ENCODE measurements at regions of chr18 and their contacts with region 1.

Region 1: GRCh38 chr18:50819728-50820378 is at the start of gene MRO:
- DNase-seq: peak; percentile 85
- H3K4me3 Mint-ChIP-seq: no peak within 1 kb of the TSS
- H3K27ac Mint-ChIP-seq: no peak within 1 kb of the TSS
- H3K4me1 Mint-ChIP-seq: no peaks in the 10 kb centered on the region
- H3K27me3 Mint-ChIP-seq: no peaks in the 10 kb centered on the region
- total RNA-seq, gene MRO: not detected

Region 2: GRCh38 chr18:50830544-50830943 is 10.7 kb after region 1 on chr18:
- CTCF ChIA-PET with region 1: interaction called, 11 read pairs
- POLR2A ChIA-PET with region 1: no interaction called
- intact Hi-C with region 1: no loop called
- DNase-seq: no peak
- H3K4me3 Mint-ChIP-seq: no peak overlapping the region
- H3K27ac Mint-ChIP-seq: no peak overlapping the region
- H3K4me1 Mint-ChIP-seq: no peaks in the 10 kb centered on the region
- H3K27me3 Mint-ChIP-seq: peaks cover 1% of the 10 kb centered on the region

Region 3: GRCh38 chr18:50902797-50903196 is 82.9 kb after region 1 on chr18:
- CTCF ChIA-PET with region 1: interaction called, 4 read pairs
- POLR2A ChIA-PET with region 1: no interaction called
- intact Hi-C with region 1: loop called (anchors 1 kb)
- DNase-seq: no peak
- H3K4me3 Mint-ChIP-seq: no peak overlapping the region
- H3K27ac Mint-ChIP-seq: no peak overlapping the region
- H3K4me1 Mint-ChIP-seq: peaks cover 28% of the 10 kb centered on the region
- H3K27me3 Mint-ChIP-seq: no peaks in the 10 kb centered on the region

Region 4: DNA sequence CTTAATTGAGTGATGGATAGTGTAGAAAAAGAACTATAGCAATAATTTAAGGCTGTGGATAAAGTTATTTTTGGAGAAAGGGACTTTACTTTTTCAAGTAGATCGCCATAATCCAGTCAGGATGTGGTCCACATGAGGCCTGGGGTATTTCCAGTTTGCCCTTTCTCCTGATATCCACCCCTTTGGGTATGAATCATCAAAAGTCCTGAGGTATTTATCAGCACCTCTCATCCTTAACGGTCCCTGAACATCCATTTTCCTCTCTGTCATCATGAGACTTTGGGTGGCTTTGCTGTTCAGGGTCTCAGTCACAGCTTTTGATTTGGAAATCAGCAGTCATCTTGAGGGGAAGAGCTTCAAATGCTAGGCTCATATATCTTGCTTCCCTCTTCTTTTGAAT is 108.7 kb after region 1 on chr18:
- CTCF ChIA-PET with region 1: no interaction called
- POLR2A ChIA-PET with region 1: no interaction called
- intact Hi-C with region 1: no loop called
- DNase-seq: no peak
- H3K4me3 Mint-ChIP-seq: no peak overlapping the region
- H3K27ac Mint-ChIP-seq: no peak overlapping the region
- H3K4me1 Mint-ChIP-seq: no peaks in the 10 kb centered on the region
- H3K27me3 Mint-ChIP-seq: no peaks in the 10 kb centered on the region

Region 5: GRCh38 chr18:50973367-50974126 is 153.7 kb after region 1 on chr18:
- CTCF ChIA-PET with region 1: no interaction called
- POLR2A ChIA-PET with region 1: no interaction called
- intact Hi-C with region 1: loop called (anchors 1 kb)
- DNase-seq: peak; percentile 23
- H3K4me3 Mint-ChIP-seq: no peak overlapping the region
- H3K27ac Mint-ChIP-seq: peak overlapping the region; percentile 75
- H3K4me1 Mint-ChIP-seq: peaks cover 34% of the 10 kb centered on the region
- H3K27me3 Mint-ChIP-seq: no peaks in the 10 kb centered on the region

Region 6: DNA sequence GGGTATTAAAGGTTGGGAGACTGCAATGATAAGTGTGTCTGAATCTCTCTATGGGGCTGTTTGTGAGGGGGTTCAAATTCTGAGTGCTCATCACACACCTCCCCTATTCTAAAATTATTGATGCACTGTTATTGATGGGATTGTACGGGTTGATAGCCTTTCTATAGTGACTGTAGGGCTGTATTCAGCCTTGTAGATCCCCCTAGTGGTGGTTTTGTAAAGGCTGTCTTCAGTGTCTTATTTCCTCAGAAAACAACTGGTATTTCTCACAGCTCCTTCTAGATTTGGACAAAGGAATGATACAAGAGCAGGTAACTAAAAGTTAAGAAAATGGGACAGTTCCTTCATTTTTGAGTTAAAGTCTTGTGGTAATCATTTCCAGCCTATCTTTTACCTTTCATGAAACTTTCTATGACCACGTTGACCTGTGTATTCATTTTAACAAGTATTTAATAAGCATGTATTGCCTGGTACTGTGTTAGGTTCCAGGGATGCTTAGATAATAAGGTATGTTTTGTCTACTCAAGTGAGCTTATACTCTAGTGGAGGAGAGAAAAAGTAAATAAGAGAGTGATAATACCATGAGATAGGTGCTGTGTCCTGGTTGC is 231.4 kb after region 1 on chr18:
- CTCF ChIA-PET with region 1: interaction called, 36 read pairs
- POLR2A ChIA-PET with region 1: no interaction called
- intact Hi-C with region 1: loop called (anchors 1 kb)
- DNase-seq: no peak
- H3K4me3 Mint-ChIP-seq: no peak overlapping the region
- H3K27ac Mint-ChIP-seq: peak overlapping the region; percentile 49
- H3K4me1 Mint-ChIP-seq: peaks cover 39% of the 10 kb centered on the region
- H3K27me3 Mint-ChIP-seq: no peaks in the 10 kb centered on the region

Measured in activated CD4-positive, alpha-beta memory T cell treated with anti-CD3 and anti-CD28 coated beads for 36 hours (primary cell).